ENCODE measurements at regions of chr18 and their contacts with region 1.

Region 1: GRCh38 chr18:28189400-28190239 is 12.7 kb upstream of the CDH2 start:
- DNase-seq: no peak
- ATAC-seq: peak in 1 of 2 donors; percentile 62

Region 2: DNA sequence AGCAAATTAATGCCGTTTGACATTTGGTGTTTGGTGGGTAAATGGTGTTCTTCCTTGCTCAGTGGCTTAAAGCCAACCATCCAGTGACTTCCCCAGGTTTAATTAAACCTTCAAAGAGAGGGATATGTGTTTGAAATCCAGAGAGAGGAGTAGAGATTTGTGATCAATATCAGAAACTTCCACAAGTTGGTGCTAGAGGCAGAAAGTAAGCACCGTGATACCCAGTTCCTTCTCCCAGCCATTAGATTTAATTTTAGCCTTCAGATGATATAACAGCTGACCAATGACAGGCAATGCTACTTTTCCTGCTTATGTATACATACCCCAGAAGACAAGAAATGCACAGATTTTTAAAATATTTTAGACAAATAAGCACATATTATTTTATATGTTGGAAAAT is 411.2 kb before region 1 on chr18:
- intact Hi-C with region 1: loop called in 1 of 2 experiments (anchors 10 kb)
- DNase-seq: no peak
- ATAC-seq: peak in 1 of 2 donors; percentile 41

Region 3: GRCh38 chr18:27860701-27861107 is 328.9 kb before region 1 on chr18:
- intact Hi-C with region 1: loop called in 1 of 2 experiments (anchors 10 kb)
- DNase-seq: no peak
- ATAC-seq: peak; percentile 78 to 83

Region 4: DNA sequence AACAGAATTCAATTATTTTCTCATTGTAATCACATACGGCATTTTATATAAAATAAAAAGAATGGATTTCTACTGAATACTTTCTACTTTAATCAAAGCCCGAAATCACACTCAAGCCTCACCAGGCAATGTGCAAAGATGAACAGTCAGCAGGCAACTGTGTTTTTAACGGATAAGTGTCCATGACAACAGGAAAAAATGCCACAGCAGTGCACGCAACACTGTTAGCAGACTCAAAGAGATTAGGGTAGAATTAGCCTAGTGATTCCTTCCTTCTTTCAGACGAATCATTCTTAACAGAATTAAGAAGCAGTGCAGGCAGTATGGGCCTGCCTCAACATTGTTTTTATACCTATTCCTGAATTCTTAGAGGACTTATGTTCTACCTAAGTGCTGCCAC is 148.3 kb before region 1 on chr18:
- intact Hi-C with region 1: no loop called
- DNase-seq: no peak
- ATAC-seq: peak in 1 of 2 donors; percentile 61

Region 5: DNA sequence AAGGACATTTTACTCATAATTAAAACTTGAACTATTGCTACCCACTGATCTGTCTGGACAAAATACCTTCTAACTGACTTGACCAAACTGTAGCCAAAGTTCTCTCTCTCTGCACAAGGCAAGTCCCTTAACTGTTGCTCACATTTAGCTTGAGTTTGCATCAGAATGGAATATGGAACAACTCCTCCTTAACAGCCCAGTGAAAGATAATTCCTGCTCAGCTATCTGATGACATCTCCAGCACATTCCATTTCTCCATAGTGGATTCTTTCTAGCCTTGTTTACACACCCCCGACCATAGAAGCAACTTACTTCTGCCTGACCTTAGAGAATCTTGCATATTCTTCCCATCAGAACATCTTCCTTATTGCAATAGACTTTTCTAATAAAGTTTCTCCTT is 304.5 kb after region 1 on chr18:
- intact Hi-C with region 1: no loop called
- DNase-seq: no peak
- ATAC-seq: no peak

Measured in left cardiac atrium (tissue), 4 donors.